CD14-positive monocyte (primary cell): ENCODE measurements at regions of chr14 and their contacts with region 1.

Region 1: GRCh38 chr14:99683619-99684355 is at the start of gene CYP46A1:
- DNase-seq: peak; percentile 97 to 99 (median 98)
- H3K4me3 ChIP-seq: peak within 1 kb of the TSS; percentile 41 to 85 (median 62)
- H3K4me3 Mint-ChIP-seq: peak within 1 kb of the TSS; percentile 89
- H3K27ac ChIP-seq: peak within 1 kb of the TSS; percentile 39 to 66
- H3K27ac Mint-ChIP-seq: peak within 1 kb of the TSS; percentile 42 to 94 (median 84)
- H3K4me1 ChIP-seq: peaks cover 15 to 20% of the 10 kb centered on the region in 2 donors
- H3K4me1 Mint-ChIP-seq: peaks cover 19% of the 10 kb centered on the region
- H3K27me3 ChIP-seq: peaks cover 8 to 21% of the 10 kb centered on the region in 2 donors
- H3K27me3 Mint-ChIP-seq: peaks cover 41 to 59% (median 42%) of the 10 kb centered on the region in 3 donors
- CTCF ChIP-seq: no peak
- polyA plus RNA-seq, gene CYP46A1: not detected

Region 2: GRCh38 chr14:99351166-99352007 is 332.4 kb before region 1 on chr14:
- intact Hi-C with region 1: no loop called
- DNase-seq: no peak
- H3K4me3 ChIP-seq: no peak overlapping the region
- H3K4me3 Mint-ChIP-seq: no peak overlapping the region
- H3K27ac ChIP-seq: no peak overlapping the region
- H3K27ac Mint-ChIP-seq: no peak overlapping the region
- H3K4me1 ChIP-seq: no peaks in the 10 kb centered on the region
- H3K4me1 Mint-ChIP-seq: no peaks in the 10 kb centered on the region
- H3K27me3 ChIP-seq: no peaks in the 10 kb centered on the region
- H3K27me3 Mint-ChIP-seq: peaks cover 1 to 7% (median 5%) of the 10 kb centered on the region in 3 donors
- CTCF ChIP-seq: no peak

Region 3: GRCh38 chr14:99480917-99481744 is 202.7 kb before region 1 on chr14 and contains the start of gene CCNK:
- intact Hi-C with region 1: loop called in 1 of 2 experiments (anchors 5 kb)
- DNase-seq: peak; percentile 100
- H3K4me3 ChIP-seq: peak within 1 kb of the TSS; percentile 72 to 96 (median 93)
- H3K4me3 Mint-ChIP-seq: peak within 1 kb of the TSS; percentile 95 to 97
- H3K27ac ChIP-seq: peak within 1 kb of the TSS; percentile 87 to 96
- H3K27ac Mint-ChIP-seq: peak within 1 kb of the TSS; percentile 97 to 99 (median 98)
- H3K4me1 ChIP-seq: peaks cover 33 to 50% of the 10 kb centered on the region in 2 donors
- H3K4me1 Mint-ChIP-seq: peaks cover 49% of the 10 kb centered on the region
- H3K27me3 ChIP-seq: no peaks in the 10 kb centered on the region
- H3K27me3 Mint-ChIP-seq: peaks cover 0 to 2% (median 0%) of the 10 kb centered on the region in 3 donors
- CTCF ChIP-seq: no peak
- polyA plus RNA-seq, gene CCNK: 7.7 to 21.5 (median 14.7) TPM

Region 4: DNA sequence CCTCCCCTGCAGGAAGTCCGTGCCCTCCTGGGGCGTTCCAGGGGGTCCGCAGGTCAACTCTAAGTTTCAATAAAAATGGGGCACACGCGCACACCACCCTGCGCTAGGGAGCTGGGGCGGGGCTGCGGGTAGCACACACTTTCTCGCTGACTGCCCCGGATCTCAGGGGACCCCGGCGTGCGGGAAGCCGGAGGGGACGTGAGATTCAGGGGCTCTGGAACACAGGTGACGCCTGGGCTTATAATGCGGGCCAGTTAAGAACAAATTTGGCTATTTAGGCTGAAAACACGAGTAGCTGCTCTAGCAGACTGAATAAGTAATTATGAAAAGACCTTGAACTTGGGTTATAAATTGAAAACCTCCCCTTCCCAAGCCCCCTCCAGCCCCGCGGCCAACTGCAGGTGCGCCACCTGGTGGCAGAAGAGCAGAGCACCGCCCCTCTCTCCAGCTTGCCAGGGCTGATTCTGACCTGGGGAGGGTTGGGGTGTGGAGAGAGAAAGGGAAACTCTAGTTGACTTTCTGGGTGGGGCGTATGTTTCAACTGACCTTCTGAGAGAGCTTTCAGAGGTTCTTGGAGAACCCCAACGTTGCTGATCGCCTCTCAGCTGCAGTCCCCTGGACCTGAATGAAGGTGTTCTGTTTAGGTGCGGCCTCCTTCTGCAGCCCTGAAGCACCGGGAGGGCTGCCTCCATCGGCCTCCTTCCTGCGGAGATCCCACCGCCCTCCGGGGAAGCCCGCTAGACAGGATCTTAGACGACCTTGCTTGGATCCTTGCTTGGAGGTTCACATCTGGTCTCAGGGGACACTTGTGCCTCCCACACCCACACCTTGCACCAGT is 263.1 kb after region 1 on chr14:
- intact Hi-C with region 1: no loop called
- DNase-seq: peak in 2 of 3 donors; percentile 23 to 31
- H3K4me3 ChIP-seq: no peak overlapping the region
- H3K4me3 Mint-ChIP-seq: peak overlapping the region in 1 of 2 donors; percentile 42
- H3K27ac ChIP-seq: no peak overlapping the region
- H3K27ac Mint-ChIP-seq: peak overlapping the region in 1 of 7 donors; percentile 38
- H3K4me1 ChIP-seq: peaks cover 9 to 18% of the 10 kb centered on the region in 2 donors
- H3K4me1 Mint-ChIP-seq: peaks cover 19% of the 10 kb centered on the region
- H3K27me3 ChIP-seq: peaks cover 0 to 16% of the 10 kb centered on the region in 2 donors
- H3K27me3 Mint-ChIP-seq: peaks cover 16 to 35% (median 33%) of the 10 kb centered on the region in 3 donors
- CTCF ChIP-seq: peak; percentile 94

Region 5: DNA sequence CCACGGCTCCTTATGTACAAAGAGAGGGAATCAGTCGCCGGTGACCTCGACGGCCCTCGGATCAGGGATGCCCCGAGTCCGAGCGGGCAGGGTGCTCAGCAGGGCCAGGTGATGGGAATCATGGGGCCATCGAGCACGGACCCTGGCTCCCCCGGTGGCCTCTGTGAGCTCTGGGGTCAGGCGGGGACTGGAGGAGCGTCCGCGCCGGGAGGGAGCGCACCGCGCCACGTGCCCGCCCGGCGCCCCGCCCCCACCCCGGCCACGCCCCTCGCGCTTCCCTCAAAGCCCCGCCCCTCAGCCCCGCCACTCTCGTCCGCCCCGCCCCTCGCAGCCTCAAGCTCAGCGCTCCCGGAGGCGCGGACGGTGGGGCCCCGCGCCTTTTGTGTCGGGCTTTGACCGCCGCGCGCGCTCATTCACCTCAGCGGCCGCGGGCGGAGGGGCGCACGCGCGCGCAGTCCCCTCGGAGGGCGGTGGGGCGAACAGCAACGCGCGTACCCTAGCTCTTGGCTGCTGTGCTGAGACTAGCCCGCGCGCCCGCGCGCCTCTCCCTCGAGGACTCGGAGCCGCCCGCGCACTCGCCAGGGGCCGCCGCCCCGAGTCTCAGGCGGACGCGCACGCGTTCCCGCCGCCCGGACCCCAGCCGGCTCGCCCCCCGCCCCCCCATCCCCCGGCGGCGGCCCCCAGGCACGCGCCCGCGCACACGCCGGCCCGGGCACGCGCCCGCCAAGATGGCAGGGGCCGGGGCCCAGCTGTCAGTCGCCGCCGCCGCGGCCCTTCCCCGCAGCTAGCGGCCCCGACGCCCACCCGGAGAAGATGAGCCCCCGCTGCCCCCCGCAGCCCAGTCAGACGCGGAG is 287.5 kb after region 1 on chr14:
- intact Hi-C with region 1: loop called in 1 of 2 experiments (anchors 5 kb)
- DNase-seq: peak; percentile 55 to 61 (median 55)
- H3K4me3 ChIP-seq: peak overlapping the region; percentile 21 to 79 (median 77)
- H3K4me3 Mint-ChIP-seq: peak overlapping the region; percentile 72 to 81
- H3K27ac ChIP-seq: no peak overlapping the region
- H3K27ac Mint-ChIP-seq: no peak overlapping the region
- H3K4me1 ChIP-seq: peaks cover 11 to 16% of the 10 kb centered on the region in 2 donors
- H3K4me1 Mint-ChIP-seq: peaks cover 10% of the 10 kb centered on the region
- H3K27me3 ChIP-seq: peaks cover 6 to 33% of the 10 kb centered on the region in 2 donors
- H3K27me3 Mint-ChIP-seq: peaks cover 23 to 44% (median 37%) of the 10 kb centered on the region in 3 donors
- CTCF ChIP-seq: no peak